ENCODE measurements at regions of chr6 and their contacts with region 1.

Region 1: DNA sequence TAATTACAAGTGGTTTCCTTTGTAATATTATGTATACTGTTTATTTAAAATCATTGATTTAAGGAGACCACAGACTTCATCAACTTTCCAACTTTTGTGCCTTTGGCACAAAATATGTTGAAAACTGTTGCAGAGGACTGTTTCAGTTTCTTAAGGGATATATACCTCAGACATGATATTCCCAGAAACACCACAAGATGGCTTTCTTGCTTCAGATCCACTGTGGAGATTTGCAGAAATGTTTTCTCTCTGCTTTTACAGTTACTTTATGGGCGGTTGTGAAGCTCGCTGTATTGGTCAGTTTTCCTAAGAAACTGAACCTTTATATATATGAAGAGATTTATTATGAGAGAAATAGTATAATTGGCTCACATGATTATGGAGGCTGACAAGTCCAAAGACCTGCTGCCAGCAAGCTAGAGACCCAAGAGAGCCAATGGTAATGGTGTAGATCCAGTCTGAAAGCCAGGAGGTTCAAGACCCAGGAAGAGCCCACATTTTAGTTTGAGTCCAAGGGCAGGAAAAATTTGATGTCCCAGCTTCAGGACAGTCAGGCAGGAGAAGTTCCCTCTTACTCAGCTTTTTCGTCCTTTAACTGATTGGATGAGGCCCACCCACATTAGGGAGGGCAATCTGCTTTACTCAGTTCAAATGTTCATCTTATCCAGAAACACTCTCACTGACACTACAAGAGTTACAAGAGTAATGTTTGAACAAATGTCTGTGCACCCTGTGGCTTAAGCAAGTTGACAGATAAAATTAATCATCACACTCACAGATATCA is 12.8 kb downstream of the ME1 start:
- DNase-seq: no peak
- ATAC-seq: peak; percentile 87

Region 2: DNA sequence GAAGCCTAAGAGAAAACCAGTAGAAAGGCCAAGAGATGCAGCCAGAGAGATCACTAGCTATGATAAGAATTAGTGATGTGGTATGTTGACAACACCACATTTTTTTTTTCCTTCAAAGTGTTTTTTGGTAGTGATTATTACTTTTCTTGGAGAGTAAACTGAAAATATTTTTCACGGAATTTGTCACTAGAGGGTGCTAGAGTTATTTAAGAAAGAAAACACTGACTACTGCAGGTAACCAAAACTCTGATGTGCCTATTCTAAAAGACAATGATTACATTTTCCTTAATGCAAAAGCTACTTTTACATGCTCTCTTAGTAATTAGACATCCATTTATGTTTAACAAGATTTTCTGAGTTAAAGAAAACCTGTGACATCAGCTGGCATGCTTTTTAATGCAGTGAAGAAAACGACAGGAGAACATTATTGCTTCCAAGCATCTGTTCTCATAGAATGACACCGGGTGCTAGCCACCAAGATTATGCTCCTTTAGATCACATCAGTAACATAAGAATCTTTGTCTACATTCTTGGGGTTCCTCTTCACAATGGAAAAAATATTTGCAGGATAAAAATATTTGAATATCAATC is 196.1 kb before region 1 on chr6:
- intact Hi-C with region 1: loop called in 1 of 2 experiments (anchors 10 kb)
- DNase-seq: no peak
- ATAC-seq: no peak

Region 3: DNA sequence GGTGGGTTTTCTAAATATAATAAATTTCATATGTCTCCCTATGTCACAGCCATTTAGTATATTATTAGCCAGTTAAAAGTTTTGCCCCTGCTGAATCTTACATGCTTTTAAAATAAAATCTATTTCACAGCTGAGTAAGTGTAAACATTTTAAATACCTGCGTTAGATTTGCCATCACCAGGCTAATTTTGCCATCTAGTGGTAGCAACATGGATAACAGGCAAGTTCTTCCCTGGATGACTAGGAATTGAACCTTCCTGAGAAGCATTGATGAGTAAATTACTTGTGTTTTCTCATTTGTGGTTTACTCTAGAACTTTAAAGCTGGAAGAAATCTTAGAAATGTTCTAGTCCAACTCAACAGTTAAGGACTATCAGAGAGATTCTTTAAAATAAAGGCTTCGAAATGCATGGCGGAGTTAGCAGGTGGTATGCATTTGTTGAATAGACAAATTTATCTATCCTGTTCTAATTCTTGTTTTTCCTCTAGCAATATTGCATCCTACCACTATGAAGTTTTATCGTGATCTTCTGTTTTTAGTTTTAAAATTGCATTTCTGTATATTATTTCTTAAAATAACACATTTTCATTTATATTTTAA is 96.9 kb after region 1 on chr6:
- intact Hi-C with region 1: loop called in 1 of 2 experiments (anchors 5 kb)
- DNase-seq: no peak
- ATAC-seq: peak; percentile 55

Region 4: DNA sequence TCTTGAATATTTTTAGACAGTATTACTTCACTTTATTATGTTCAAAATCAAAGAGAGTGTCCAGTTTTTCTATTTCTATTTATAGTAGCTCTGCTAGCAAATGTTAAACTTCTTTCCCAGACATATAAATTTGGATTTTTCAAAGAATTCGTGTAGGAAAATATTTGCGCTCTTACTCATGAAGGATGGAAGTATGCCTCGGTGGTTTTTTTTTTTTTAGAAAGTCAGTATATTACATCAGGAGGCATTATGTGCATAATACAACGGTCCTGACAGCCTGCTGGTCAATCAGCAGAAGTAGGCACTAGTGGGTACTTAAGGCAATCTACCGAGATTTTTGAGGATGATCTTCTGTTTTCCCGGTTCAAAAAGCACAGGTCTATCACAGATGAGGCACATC is 1097.0 kb after region 1 on chr6:
- intact Hi-C with region 1: no loop called
- DNase-seq: no peak
- ATAC-seq: no peak

Measured in left colon (tissue), 2 donors.